GM12878 (cell line): ENCODE measurements at regions of chr1 and their contacts with region 1.

Region 1: DNA sequence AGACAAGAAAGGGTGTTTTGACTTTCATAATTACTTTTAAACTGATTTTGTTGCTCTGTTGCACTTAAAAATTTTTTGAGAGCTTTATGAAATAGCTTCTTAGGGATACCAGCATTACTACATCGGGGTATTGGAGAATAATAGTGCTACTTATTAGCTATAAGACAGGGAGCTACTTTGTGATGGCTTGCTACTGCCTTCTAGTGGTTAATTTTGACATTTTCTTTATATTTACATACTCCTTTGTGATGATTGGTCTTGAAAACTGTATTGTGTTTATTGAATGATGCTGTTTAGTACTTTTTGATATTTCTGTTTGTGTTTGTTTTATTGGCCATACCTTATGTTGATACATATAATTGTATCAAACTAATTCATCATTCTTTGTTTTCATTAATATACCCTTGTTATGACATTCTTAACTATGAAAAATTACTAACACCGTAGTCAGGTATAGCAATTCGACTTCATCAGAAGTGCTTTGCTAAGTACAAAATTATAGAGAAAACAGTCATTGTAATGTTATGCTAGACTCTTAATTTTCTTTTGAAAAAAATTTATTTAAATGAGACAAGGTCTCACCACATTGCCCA is 85.5 kb downstream of the CLIC4 start:
- DNase-seq: no peak
- ATAC-seq: peak; percentile 94
- H3K4me3 ChIP-seq: no peak overlapping the region
- H3K27ac ChIP-seq: no peak overlapping the region
- H3K4me1 ChIP-seq: peaks cover 3% of the 10 kb centered on the region; the same call in 1 of the 2 replicates
- H3K27me3 ChIP-seq: no peaks in the 10 kb centered on the region
- CTCF ChIP-seq: peak; percentile 70 to 89 (median 79)
- EP300 ChIP-seq: no peak
- POLR2A ChIP-seq: no peak
- RAD21 ChIP-seq: peak; percentile 88

Region 2: DNA sequence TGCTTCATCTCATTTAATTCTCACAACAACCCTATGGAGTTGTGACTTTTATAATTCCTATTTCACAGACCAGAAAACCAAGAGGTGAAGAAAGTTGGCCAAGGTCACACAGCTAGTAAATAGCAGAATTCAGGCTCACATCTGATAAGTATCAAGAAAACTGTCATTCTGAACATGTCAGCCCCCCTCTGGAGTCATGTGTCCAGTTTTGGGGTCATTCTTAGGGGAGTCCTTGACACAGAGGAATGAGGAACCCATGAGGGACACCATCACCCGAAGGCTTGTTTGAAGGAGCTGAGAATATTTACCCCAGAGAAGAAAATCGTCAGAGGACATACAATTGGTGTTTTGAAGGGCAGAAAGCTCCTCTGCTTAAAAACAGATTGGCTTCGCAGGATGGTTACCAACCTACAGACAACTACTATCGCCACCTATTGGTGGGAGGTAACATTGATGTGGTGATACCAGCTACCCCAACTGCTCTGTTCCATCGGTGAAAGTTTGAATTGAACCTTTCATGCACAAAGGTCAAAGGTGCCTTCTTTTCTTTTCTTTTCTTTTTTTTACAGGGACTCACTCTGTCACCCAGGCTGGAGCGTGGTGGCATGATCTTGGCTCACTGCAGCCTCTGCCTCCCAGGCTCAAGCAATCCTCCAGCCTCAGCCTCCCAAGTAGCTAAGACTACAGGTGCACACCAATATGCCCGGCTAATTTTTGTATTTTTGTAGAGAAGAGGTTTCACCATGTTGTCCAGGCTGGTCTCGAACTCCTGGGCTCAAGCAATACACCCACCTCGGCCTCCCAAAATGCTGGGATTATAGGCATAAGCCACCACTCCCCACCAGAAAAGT is 243.6 kb before region 1 on chr1:
- CTCF ChIA-PET with region 1: interaction called, 18 read pairs
- POLR2A ChIA-PET with region 1: no interaction called
- RAD21 ChIA-PET with region 1: interaction called, 4 read pairs
- SMC1A ChIA-PET with region 1: interaction called, 8 read pairs
- in situ Hi-C with region 1: no loop called
- intact Hi-C with region 1: no loop called
- DNase-seq: no peak
- ATAC-seq: peak; percentile 98
- H3K4me3 ChIP-seq: no peak overlapping the region
- H3K27ac ChIP-seq: no peak overlapping the region
- H3K4me1 ChIP-seq: no peaks in the 10 kb centered on the region
- H3K27me3 ChIP-seq: peaks cover 2 to 5% of the 10 kb centered on the region in 2 experiments; a peak in 2 of 4 replicates
- CTCF ChIP-seq: peak; percentile 78 to 84 (median 78)
- EP300 ChIP-seq: no peak
- POLR2A ChIP-seq: no peak
- RAD21 ChIP-seq: peak; percentile 75

Region 3: GRCh38 chr1:24688621-24689195 is 142.1 kb before region 1 on chr1:
- CTCF ChIA-PET with region 1: interaction called, 655 read pairs
- POLR2A ChIA-PET with region 1: interaction called, 13 read pairs
- RAD21 ChIA-PET with region 1: interaction called, 377 read pairs
- SMC1A ChIA-PET with region 1: interaction called, 412 read pairs
- in situ Hi-C with region 1: loop called (anchors 5 kb)
- intact Hi-C with region 1: loop called (anchors 2 kb)
- DNase-seq: no peak
- ATAC-seq: peak; percentile 99
- H3K4me3 ChIP-seq: no peak overlapping the region
- H3K27ac ChIP-seq: no peak overlapping the region
- H3K4me1 ChIP-seq: peaks cover 5% of the 10 kb centered on the region
- H3K27me3 ChIP-seq: no peaks in the 10 kb centered on the region
- CTCF ChIP-seq: peak; percentile 91 to 96 (median 96)
- EP300 ChIP-seq: no peak
- POLR2A ChIP-seq: no peak
- RAD21 ChIP-seq: peak; percentile 99

Region 4: GRCh38 chr1:24735509-24736375 is 95.0 kb before region 1 on chr1:
- CTCF ChIA-PET with region 1: interaction called, 13 read pairs
- POLR2A ChIA-PET with region 1: interaction called, 4 read pairs
- RAD21 ChIA-PET with region 1: interaction called, 14 read pairs
- SMC1A ChIA-PET with region 1: interaction called, 107 read pairs
- in situ Hi-C with region 1: no loop called
- intact Hi-C with region 1: no loop called
- DNase-seq: no peak
- ATAC-seq: no peak
- H3K4me3 ChIP-seq: no peak overlapping the region
- H3K27ac ChIP-seq: peak overlapping the region; percentile 33; the same call in 1 of the 2 replicates
- H3K4me1 ChIP-seq: peaks cover 38% of the 10 kb centered on the region
- H3K27me3 ChIP-seq: no peaks in the 10 kb centered on the region
- CTCF ChIP-seq: no peak
- EP300 ChIP-seq: no peak
- POLR2A ChIP-seq: no peak
- RAD21 ChIP-seq: no peak

Region 5: GRCh38 chr1:24769656-24770651 is 60.8 kb before region 1 on chr1:
- CTCF ChIA-PET with region 1: interaction called, 42 read pairs
- POLR2A ChIA-PET with region 1: interaction called, 6 read pairs
- RAD21 ChIA-PET with region 1: interaction called, 12 read pairs
- SMC1A ChIA-PET with region 1: interaction called, 12 read pairs
- in situ Hi-C with region 1: no loop called
- intact Hi-C with region 1: no loop called
- DNase-seq: no peak
- ATAC-seq: peak; percentile 78
- H3K4me3 ChIP-seq: no peak overlapping the region
- H3K27ac ChIP-seq: peak overlapping the region; percentile 54
- H3K4me1 ChIP-seq: peaks cover 7% of the 10 kb centered on the region; the same call in 1 of the 2 replicates
- H3K27me3 ChIP-seq: no peaks in the 10 kb centered on the region
- CTCF ChIP-seq: no peak
- EP300 ChIP-seq: peak; percentile 49 to 57; a peak in 3 of 4 replicates
- POLR2A ChIP-seq: no peak
- RAD21 ChIP-seq: no peak

Region 6: GRCh38 chr1:25204797-25205480 is 374.2 kb after region 1 on chr1:
- CTCF ChIA-PET with region 1: interaction called, 15 read pairs
- POLR2A ChIA-PET with region 1: no interaction called
- RAD21 ChIA-PET with region 1: no interaction called
- SMC1A ChIA-PET with region 1: interaction called, 3 read pairs
- in situ Hi-C with region 1: no loop called
- intact Hi-C with region 1: no loop called
- DNase-seq: no peak
- ATAC-seq: peak; percentile 77
- H3K4me3 ChIP-seq: no peak overlapping the region
- H3K27ac ChIP-seq: no peak overlapping the region
- H3K4me1 ChIP-seq: no peaks in the 10 kb centered on the region
- H3K27me3 ChIP-seq: peaks cover 0 to 3% of the 10 kb centered on the region in 2 experiments; a peak in 1 of 4 replicates
- CTCF ChIP-seq: peak; percentile 56 to 65 (median 64)
- EP300 ChIP-seq: no peak
- POLR2A ChIP-seq: no peak
- RAD21 ChIP-seq: peak; percentile 79